AG04450 (cell line): ENCODE measurements at regions of chr10 and their contacts with region 1.

Region 1: DNA sequence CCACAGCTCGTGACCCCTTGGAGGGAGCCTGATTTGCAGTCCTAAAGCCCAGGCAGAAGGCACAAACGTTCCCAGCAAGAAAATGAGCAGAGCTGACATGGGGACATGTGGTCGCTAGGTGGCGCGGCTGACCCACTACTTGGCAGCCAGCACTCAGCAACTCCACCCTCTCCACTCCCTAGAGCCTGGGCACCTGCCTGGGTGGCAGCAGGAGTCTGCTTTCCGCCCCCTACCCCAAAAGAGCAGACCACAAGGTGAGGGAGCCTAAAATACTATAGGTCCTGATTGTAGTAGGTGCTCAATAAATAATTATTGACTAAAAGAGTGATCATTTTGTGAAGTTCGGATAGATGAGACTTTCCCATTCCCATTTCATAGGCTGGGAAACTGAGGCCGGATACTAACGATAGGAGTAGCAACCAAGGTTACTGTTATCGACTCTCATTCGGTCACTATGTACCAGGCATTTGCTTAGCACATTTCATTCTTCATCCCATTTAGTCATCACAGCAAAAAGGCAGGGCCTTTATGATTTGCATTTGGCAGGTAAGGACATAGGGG is 57.4 kb downstream of the NEUROG3 start:
- DNase-seq: peak; percentile 15
- H3K4me3 ChIP-seq: no peak overlapping the region
- H3K27ac ChIP-seq: no peak overlapping the region
- H3K27me3 ChIP-seq: peaks cover 11% of the 10 kb centered on the region
- CTCF ChIP-seq: peak; percentile 88

Region 2: GRCh38 chr10:69527961-69528360 is 12.2 kb after region 1 on chr10:
- CTCF ChIA-PET with region 1: interaction called, 12 read pairs
- POLR2A ChIA-PET with region 1: no interaction called
- DNase-seq: no peak
- H3K4me3 ChIP-seq: no peak overlapping the region
- H3K27ac ChIP-seq: no peak overlapping the region
- H3K27me3 ChIP-seq: peaks cover 6% of the 10 kb centered on the region
- CTCF ChIP-seq: no peak

Region 3: GRCh38 chr10:69639291-69640195 is 123.8 kb after region 1 on chr10:
- CTCF ChIA-PET with region 1: interaction called, 138 read pairs
- POLR2A ChIA-PET with region 1: no interaction called
- DNase-seq: peak; percentile 32
- H3K4me3 ChIP-seq: no peak overlapping the region
- H3K27ac ChIP-seq: no peak overlapping the region
- H3K27me3 ChIP-seq: peaks cover 64% of the 10 kb centered on the region
- CTCF ChIP-seq: peak; percentile 89